GM10248 (cell line): ENCODE measurements at regions of chr11 and their contacts with region 1.

Region 1: DNA sequence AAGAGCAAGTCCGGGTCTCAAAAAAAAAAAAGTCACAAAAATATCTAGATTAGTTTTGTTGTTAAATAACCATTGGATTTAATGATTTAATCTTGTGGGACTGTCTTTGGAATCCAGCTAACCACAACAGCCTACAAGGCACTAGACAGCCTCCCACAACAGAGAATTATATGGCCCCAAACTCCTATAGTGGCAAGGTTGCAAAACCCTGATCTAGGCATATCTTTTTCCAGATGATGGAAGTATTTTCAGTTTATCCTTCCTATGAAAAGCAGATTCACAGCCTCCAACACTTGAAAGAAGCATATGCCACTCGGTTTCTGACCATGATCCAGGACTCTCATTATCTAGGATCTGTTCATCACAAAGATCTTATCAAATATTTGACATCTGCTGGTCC is 5.4 kb upstream of the C11orf87 start:
- DNase-seq: no peak
- CTCF ChIP-seq: no peak

Region 2: DNA sequence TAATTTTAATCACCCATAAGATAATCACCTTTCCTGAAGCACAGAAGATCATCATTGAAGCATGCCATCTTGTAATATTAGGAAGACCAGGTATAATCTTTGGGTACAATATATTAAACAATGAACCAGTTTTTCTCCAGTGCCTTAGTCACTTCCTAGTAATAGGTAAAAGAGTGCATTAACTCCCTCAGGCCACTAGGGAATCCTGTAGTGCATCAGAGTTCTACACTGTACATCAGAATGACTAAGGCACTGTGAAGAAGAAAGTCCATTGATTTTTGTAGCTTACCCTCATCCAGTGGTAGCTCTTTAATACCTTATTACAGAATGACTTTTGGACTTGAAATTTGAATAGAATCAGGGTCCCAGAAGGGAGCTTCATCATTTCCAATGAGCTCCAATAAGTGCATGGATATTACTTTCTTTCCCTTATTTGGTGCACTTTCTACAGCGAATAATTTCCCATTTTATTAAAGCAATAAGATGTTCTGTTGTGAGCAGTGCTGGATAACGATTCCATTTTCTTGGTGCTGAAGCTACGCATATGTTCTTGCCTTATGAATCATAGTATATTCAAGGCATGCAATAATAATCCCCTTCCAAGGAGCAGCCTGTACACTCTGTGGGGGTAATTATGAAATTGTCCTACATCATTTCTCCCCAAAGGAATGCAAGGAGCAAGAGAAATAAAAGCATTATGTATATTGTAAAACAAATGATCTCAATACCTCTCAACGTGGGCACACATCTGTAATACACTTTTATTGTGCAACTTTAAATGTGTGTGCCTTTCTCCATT is 10.0 kb after region 1 on chr11:
- CTCF ChIA-PET with region 1: interaction called, 27 read pairs
- POLR2A ChIA-PET with region 1: no interaction called
- DNase-seq: no peak
- CTCF ChIP-seq: no peak

Region 3: GRCh38 chr11:109480251-109480650 is 63.6 kb after region 1 on chr11:
- CTCF ChIA-PET with region 1: no interaction called
- POLR2A ChIA-PET with region 1: no interaction called
- DNase-seq: no peak
- CTCF ChIP-seq: no peak